ENCODE measurements at regions of chr10 and their contacts with region 1.

Region 1: GRCh38 chr10:45000752-45001380 is at the start of gene ZNF22:
- DNase-seq: peak; percentile 44
- H3K4me3 ChIP-seq: peak within 1 kb of the TSS; percentile 25 to 47 (median 42)
- H3K27ac ChIP-seq: peak within 1 kb of the TSS; percentile 65
- H3K4me1 ChIP-seq: peaks cover 11% of the 10 kb centered on the region
- H3K27me3 ChIP-seq: no peaks in the 10 kb centered on the region
- CTCF ChIP-seq: no peak
- total RNA-seq, gene ZNF22: 7.2 to 7.7 TPM

Region 2: GRCh38 chr10:44959247-44960087 is 41.4 kb before region 1 on chr10 and contains the start of gene RASSF4:
- CTCF ChIA-PET with region 1: no interaction called
- dilution Hi-C with region 1: loop called (anchors 5 kb)
- in situ Hi-C with region 1: no loop called
- intact Hi-C with region 1: no loop called
- DNase-seq: peak; percentile 85
- H3K4me3 ChIP-seq: peak within 1 kb of the TSS; percentile 75 to 87 (median 80)
- H3K27ac ChIP-seq: peak within 1 kb of the TSS; percentile 49
- H3K4me1 ChIP-seq: peaks cover 24% of the 10 kb centered on the region
- H3K27me3 ChIP-seq: no peaks in the 10 kb centered on the region
- CTCF ChIP-seq: no peak
- total RNA-seq, gene RASSF4: 1.4 to 4.0 TPM

Region 3: GRCh38 chr10:46030091-46030937 is 1029.4 kb after region 1 on chr10 and contains the start of gene NCOA4:
- CTCF ChIA-PET with region 1: no interaction called
- dilution Hi-C with region 1: no loop called
- in situ Hi-C with region 1: no loop called
- intact Hi-C with region 1: loop called (anchors 5 kb)
- DNase-seq: peak; percentile 94
- H3K4me3 ChIP-seq: peak within 1 kb of the TSS; percentile 88 to 90 (median 89)
- H3K27ac ChIP-seq: peak within 1 kb of the TSS; percentile 79
- H3K4me1 ChIP-seq: peaks cover 28% of the 10 kb centered on the region
- H3K27me3 ChIP-seq: no peaks in the 10 kb centered on the region
- CTCF ChIP-seq: peak; percentile 79 to 81
- total RNA-seq, gene NCOA4: 94.2 to 171 TPM